ENCODE measurements at regions of chr11 and their contacts with region 1.

Region 1: GRCh38 chr11:75133976-75134375 is 16.9 kb upstream of the SLCO2B1 start:
- DNase-seq: no peak
- H3K4me3 ChIP-seq: no peak overlapping the region
- H3K27ac ChIP-seq: no peak overlapping the region
- H3K4me1 ChIP-seq: no peaks in the 10 kb centered on the region
- H3K27me3 ChIP-seq: peaks cover 44% of the 10 kb centered on the region

Region 2: DNA sequence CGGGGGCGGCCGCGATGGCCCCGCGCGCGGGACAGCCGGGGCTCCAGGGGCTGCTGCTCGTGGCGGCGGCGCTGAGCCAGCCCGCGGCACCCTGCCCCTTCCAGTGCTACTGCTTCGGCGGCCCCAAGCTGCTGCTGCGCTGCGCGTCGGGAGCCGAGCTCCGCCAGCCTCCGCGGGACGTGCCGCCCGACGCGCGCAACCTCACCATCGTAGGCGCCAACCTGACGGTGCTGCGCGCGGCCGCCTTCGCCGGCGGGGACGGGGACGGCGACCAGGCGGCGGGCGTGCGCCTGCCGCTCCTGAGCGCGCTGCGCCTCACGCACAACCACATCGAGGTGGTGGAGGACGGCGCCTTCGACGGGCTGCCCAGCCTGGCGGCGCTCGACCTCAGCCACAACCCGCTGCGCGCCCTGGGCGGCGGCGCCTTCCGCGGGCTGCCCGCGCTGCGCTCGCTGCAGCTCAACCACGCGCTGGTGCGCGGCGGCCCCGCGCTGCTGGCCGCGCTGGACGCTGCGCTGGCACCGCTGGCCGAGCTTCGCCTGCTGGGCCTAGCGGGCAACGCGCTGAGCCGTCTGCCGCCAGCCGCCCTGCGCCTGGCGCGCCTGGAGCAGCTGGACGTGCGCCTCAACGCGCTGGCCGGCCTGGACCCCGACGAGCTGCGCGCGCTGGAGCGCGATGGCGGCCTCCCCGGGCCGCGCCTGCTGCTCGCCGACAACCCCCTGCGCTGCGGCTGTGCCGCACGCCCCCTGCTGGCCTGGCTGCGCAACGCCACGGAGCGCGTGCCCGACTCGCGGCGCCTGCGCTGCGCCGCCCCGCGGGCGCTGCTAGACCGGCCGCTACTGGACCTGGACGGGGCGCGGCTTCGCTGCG is 107.3 kb after region 1 on chr11:
- in situ Hi-C with region 1: loop called (anchors 10 kb)
- DNase-seq: peak; percentile 94
- H3K4me3 ChIP-seq: peak overlapping the region; percentile 65
- H3K27ac ChIP-seq: no peak overlapping the region
- H3K4me1 ChIP-seq: no peaks in the 10 kb centered on the region
- H3K27me3 ChIP-seq: peaks cover 49% of the 10 kb centered on the region

Measured in GM23248 (cell line).